Endothelial cell of umbilical vein (primary cell): ENCODE measurements at regions of chr4 and their contacts with region 1.

Region 1: DNA sequence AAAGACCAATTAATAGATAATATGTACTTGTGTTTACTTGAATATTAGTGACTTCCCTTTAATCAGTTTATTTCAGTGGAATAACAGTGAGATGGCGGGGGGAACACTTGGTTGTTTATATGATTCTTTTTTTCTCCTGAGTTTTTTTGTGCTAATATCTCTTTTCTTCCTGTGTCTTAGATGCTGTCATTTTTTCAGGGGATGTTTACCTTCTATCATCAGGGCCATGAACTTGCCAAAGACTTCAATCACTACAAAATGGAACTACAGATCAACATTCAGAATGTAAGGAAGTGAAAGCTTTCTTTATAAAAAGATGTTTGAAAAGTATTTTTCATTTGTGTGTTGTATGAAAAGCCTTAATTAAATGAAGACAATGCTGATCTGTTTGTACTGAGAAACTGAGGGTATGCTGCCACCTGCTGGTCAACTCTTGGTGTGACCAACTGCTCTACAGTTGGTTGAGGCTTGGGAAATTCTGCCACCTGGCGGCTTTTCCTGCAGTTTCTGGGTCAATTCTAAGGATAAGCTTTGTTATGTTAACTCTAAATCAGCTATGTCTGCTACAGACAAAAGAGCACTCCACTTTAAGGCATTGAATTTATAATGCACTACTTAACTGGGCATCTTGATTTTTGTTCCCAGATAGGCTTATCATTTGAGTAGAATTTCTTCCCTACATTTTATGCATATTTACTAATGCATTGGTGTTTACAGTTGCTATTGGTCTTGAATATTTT is 134.8 kb downstream of the ARHGAP10 start:
- DNase-seq: peak; percentile 92
- H3K4me3 ChIP-seq: no peak overlapping the region
- H3K27ac ChIP-seq: no peak overlapping the region
- H3K4me1 ChIP-seq: peaks cover 9% of the 10 kb centered on the region
- H3K27me3 ChIP-seq: no peaks in the 10 kb centered on the region
- CTCF ChIP-seq: peak; percentile 92 to 99
- POLR2A ChIP-seq: no peak

Region 2: GRCh38 chr4:147019061-147019460 is 847.6 kb before region 1 on chr4:
- CTCF ChIA-PET with region 1: interaction called, 25 read pairs
- POLR2A ChIA-PET with region 1: no interaction called
- dilution Hi-C with region 1: no loop called
- intact Hi-C with region 1: loop called (anchors 2 kb)
- DNase-seq: peak; percentile 62
- H3K4me3 ChIP-seq: no peak overlapping the region
- H3K27ac ChIP-seq: no peak overlapping the region
- H3K4me1 ChIP-seq: no peaks in the 10 kb centered on the region
- H3K27me3 ChIP-seq: peaks cover 7% of the 10 kb centered on the region in 2 experiments
- CTCF ChIP-seq: peak; percentile 52 to 66
- POLR2A ChIP-seq: no peak

Region 3: GRCh38 chr4:147605499-147605898 is 261.2 kb before region 1 on chr4:
- CTCF ChIA-PET with region 1: interaction called, 21 read pairs
- POLR2A ChIA-PET with region 1: no interaction called
- dilution Hi-C with region 1: no loop called
- intact Hi-C with region 1: no loop called
- DNase-seq: no peak
- H3K4me3 ChIP-seq: no peak overlapping the region
- H3K27ac ChIP-seq: no peak overlapping the region
- H3K4me1 ChIP-seq: no peaks in the 10 kb centered on the region
- H3K27me3 ChIP-seq: peaks cover 5 to 9% of the 10 kb centered on the region in 2 experiments
- CTCF ChIP-seq: no peak
- POLR2A ChIP-seq: no peak

Region 4: GRCh38 chr4:147644471-147644870 is 222.2 kb before region 1 on chr4:
- CTCF ChIA-PET with region 1: interaction called, 48 read pairs
- POLR2A ChIA-PET with region 1: no interaction called
- dilution Hi-C with region 1: no loop called
- intact Hi-C with region 1: no loop called
- DNase-seq: no peak
- H3K4me3 ChIP-seq: no peak overlapping the region
- H3K27ac ChIP-seq: no peak overlapping the region
- H3K4me1 ChIP-seq: no peaks in the 10 kb centered on the region
- H3K27me3 ChIP-seq: no peaks in the 10 kb centered on the region
- CTCF ChIP-seq: no peak
- POLR2A ChIP-seq: no peak

Region 5: DNA sequence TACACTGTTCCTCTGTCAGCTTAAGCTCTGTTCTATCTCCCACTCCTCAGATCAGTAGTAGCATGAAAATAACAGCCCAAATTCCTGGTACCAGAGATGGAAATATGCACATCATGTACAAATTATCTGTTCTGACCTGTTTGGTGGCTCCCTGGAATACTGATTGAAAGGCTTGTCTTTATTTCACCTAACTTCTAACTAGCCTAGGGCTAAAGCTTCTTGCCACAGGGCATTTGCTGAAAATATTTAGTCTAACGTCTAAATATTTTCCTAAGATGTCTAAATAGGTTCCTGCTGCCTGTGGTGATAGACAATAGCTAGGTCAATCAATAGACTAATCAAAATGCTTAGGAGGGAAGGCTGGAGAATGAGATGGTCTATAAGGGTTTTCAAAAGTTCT is 169.8 kb before region 1 on chr4:
- CTCF ChIA-PET with region 1: interaction called, 308 read pairs
- POLR2A ChIA-PET with region 1: no interaction called
- dilution Hi-C with region 1: no loop called
- intact Hi-C with region 1: no loop called
- DNase-seq: no peak
- H3K4me3 ChIP-seq: no peak overlapping the region
- H3K27ac ChIP-seq: no peak overlapping the region
- H3K4me1 ChIP-seq: no peaks in the 10 kb centered on the region
- H3K27me3 ChIP-seq: peaks cover 3 to 8% of the 10 kb centered on the region in 2 experiments
- CTCF ChIP-seq: no peak
- POLR2A ChIP-seq: no peak

Region 6: GRCh38 chr4:147786031-147786430 is 80.7 kb before region 1 on chr4:
- CTCF ChIA-PET with region 1: interaction called, 17 read pairs
- POLR2A ChIA-PET with region 1: no interaction called
- dilution Hi-C with region 1: no loop called
- intact Hi-C with region 1: no loop called
- DNase-seq: no peak
- H3K4me3 ChIP-seq: no peak overlapping the region
- H3K27ac ChIP-seq: no peak overlapping the region
- H3K4me1 ChIP-seq: peaks cover 7% of the 10 kb centered on the region
- H3K27me3 ChIP-seq: no peaks in the 10 kb centered on the region
- CTCF ChIP-seq: no peak
- POLR2A ChIP-seq: no peak

Region 7: GRCh38 chr4:147879676-147880075 is 13.0 kb after region 1 on chr4:
- CTCF ChIA-PET with region 1: interaction called, 55 read pairs
- POLR2A ChIA-PET with region 1: no interaction called
- dilution Hi-C with region 1: no loop called
- intact Hi-C with region 1: no loop called
- DNase-seq: no peak
- H3K4me3 ChIP-seq: no peak overlapping the region
- H3K27ac ChIP-seq: no peak overlapping the region
- H3K4me1 ChIP-seq: no peaks in the 10 kb centered on the region
- H3K27me3 ChIP-seq: no peaks in the 10 kb centered on the region
- CTCF ChIP-seq: no peak
- POLR2A ChIP-seq: no peak

Region 8: DNA sequence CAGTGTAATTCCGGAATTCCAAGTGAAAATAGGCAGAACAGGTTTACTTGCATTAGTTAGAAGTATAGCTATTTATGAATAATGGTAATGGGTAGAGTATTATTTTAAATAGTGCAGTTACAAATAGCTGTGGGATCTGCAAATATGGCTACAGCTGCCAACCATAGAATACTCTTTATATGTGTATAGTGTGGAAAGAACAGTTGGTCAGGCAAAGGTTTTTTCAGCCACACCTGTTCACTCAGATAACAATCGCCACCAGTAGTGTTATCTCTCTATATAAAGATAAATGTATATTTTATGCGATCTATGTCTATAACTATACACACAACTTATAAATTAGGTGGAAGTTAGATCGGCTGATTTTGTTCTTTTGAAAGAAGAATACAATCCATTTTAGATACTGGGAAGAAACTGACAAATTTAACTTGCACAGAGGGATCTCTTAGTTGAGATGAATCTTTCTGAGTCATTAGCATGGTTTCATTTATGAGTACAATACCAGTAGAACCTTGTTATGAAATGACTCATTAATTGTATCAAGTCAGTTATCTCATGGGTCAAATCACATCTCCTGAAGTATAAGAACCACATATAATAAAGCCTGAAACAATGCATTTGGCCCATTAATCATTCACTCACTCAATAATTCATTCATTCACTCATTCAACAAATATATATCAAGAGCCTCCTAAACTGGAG is 676.4 kb after region 1 on chr4:
- CTCF ChIA-PET with region 1: no interaction called
- POLR2A ChIA-PET with region 1: no interaction called
- dilution Hi-C with region 1: no loop called
- intact Hi-C with region 1: no loop called
- DNase-seq: peak; percentile 3
- H3K4me3 ChIP-seq: no peak overlapping the region
- H3K27ac ChIP-seq: no peak overlapping the region
- H3K4me1 ChIP-seq: no peaks in the 10 kb centered on the region
- H3K27me3 ChIP-seq: no peaks in the 10 kb centered on the region
- CTCF ChIP-seq: no peak
- POLR2A ChIP-seq: no peak